ENCODE measurements at regions of chr4 and their contacts with region 1.

Region 1: GRCh38 chr4:54056360-54056759 is 8.0 kb downstream of the CHIC2 start:
- DNase-seq: no peak
- H3K4me3 ChIP-seq: no peak overlapping the region
- H3K27ac ChIP-seq: no peak overlapping the region
- H3K4me1 ChIP-seq: peaks cover 7 to 50% (median 19%) of the 10 kb centered on the region in 4 donors
- H3K27me3 ChIP-seq: no peaks in the 10 kb centered on the region
- CTCF ChIP-seq: no peak
- EP300 ChIP-seq: no peak
- POLR2A ChIP-seq: no peak

Region 2: DNA sequence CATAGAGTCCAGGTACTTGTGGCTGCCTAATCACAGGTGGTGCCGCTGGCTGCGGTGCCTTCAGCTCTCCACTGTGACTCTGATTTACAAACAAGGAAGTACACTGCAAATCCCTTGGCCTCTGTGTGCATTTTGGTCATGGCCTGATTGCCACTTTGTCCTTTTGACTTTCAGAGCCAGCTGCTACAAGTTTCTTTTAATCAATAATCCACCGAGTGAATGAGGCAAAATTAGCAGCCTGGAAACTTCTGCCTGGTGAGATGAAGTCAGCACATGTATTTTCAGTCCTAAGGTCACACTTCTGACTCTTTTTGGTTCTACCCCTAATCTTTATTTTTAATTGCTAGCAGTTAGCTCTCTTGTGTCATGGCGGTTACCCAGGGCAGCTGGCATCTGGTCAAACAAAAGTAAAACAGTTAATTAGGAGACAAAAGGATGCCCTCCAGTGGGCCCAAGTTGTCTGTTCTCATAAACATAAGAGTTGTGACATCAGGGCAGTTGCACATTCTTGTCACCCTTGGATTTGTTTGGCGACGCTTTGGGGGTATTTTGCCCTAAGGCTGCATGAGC is 402.8 kb before region 1 on chr4:
- in situ Hi-C with region 1: no loop called
- intact Hi-C with region 1: no loop called
- DNase-seq: peak; percentile 38
- H3K4me3 ChIP-seq: no peak overlapping the region
- H3K27ac ChIP-seq: peak overlapping the region; percentile 30 to 59 (median 54)
- H3K4me1 ChIP-seq: peaks cover 0 to 36% (median 27%) of the 10 kb centered on the region in 4 donors
- H3K27me3 ChIP-seq: no peaks in the 10 kb centered on the region
- CTCF ChIP-seq: no peak
- EP300 ChIP-seq: no peak
- POLR2A ChIP-seq: no peak

Region 3: GRCh38 chr4:54082168-54082567 is 25.8 kb after region 1 on chr4:
- in situ Hi-C with region 1: no loop called
- intact Hi-C with region 1: no loop called
- DNase-seq: peak; percentile 57
- H3K4me3 ChIP-seq: no peak overlapping the region
- H3K27ac ChIP-seq: no peak overlapping the region
- H3K4me1 ChIP-seq: peaks cover 0 to 8% (median 7%) of the 10 kb centered on the region in 4 donors
- H3K27me3 ChIP-seq: peaks cover 13% of the 10 kb centered on the region
- CTCF ChIP-seq: no peak
- EP300 ChIP-seq: no peak
- POLR2A ChIP-seq: no peak

Region 4: DNA sequence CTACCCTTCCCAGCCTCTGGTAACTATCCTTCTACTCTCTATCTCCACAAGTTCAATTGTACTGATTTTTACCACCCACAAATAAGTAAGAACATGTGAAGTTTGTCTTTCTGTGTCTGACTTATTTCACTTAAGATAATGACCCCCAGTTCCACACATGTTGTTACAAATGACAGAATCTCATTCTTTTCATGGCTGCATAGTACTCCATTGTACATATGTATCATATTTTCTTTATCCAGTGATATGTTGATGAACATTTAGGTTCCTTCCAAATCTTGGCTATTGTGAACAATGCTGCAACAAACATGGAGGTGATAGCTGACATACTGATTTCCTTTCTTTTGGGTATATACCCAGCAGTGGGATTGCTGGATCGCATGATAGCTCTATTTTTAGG is 71.3 kb after region 1 on chr4:
- in situ Hi-C with region 1: no loop called
- intact Hi-C with region 1: loop called (anchors 2 kb)
- DNase-seq: no peak
- H3K4me3 ChIP-seq: no peak overlapping the region
- H3K27ac ChIP-seq: no peak overlapping the region
- H3K4me1 ChIP-seq: no peaks in the 10 kb centered on the region
- H3K27me3 ChIP-seq: peaks cover 14% of the 10 kb centered on the region
- CTCF ChIP-seq: no peak
- EP300 ChIP-seq: no peak
- POLR2A ChIP-seq: no peak

Region 5: DNA sequence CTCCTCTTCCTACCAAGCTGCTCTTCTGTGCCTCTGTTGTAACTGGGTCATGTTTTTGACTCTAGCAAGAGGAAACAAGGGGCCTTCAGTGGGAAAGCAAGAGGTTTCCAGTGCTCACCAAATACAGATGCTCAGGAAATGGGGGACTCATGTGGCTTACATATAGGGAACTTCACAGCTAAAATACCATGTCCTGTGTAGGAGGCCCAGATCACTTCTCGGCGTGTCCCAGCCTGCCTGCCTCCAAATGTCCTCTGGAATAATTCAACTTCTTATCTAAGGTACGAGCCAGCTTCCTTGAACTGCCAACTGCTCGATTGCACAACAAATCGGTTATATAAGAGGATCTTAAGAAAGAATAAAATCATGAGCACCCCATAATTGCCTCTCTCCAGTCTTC is 762.7 kb after region 1 on chr4:
- in situ Hi-C with region 1: no loop called
- intact Hi-C with region 1: no loop called
- DNase-seq: no peak
- H3K4me3 ChIP-seq: no peak overlapping the region
- H3K27ac ChIP-seq: no peak overlapping the region
- H3K4me1 ChIP-seq: no peaks in the 10 kb centered on the region
- H3K27me3 ChIP-seq: no peaks in the 10 kb centered on the region
- CTCF ChIP-seq: no peak
- EP300 ChIP-seq: no peak
- POLR2A ChIP-seq: no peak